ENCODE measurements at regions of chr19 and their contacts with region 1.

Region 1: DNA sequence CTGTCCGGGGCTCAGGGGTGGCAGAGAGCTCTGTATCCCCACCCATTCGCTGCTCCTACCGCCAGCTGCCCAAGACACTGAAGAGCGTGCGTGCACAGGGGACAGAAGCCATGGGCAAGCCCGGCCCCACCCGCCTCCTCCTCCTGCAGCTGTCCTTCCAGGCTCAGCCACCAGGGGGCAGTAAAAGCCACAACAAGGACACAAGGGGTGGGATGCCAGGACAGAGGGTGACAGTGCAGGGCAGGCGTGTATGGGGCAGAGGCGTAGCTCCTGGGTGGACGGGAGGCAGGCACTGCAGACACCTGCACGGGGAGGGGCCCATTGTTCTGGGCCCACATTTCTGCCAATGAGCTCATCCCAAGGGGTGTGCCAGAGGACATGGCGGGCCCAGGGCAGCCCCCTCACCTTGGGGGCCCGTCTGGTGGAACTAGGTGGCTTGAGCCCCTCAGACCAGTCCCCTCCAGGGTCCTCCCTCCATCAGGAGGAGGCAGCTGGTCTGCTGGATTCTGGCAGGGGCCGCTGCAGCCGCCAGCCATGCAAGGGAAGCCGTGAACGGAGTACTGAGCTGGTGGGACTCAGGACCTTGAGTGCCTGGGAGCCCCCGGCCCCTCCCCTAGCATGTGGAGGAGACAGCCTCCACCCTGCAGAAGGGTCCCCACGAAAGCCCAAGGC is 61.1 kb downstream of the MLLT1 start:
- DNase-seq: peak; percentile 27
- H3K4me3 ChIP-seq: no peak overlapping the region
- H3K27ac ChIP-seq: peak overlapping the region in 3 of 4 donors; percentile 31 to 45 (median 35)
- H3K4me1 ChIP-seq: peaks cover 45 to 72% (median 52%) of the 10 kb centered on the region in 3 donors
- H3K27me3 ChIP-seq: no peaks in the 10 kb centered on the region
- CTCF ChIP-seq: peak; percentile 93 to 99 (median 98)
- POLR2A ChIP-seq: no peak

Region 2: DNA sequence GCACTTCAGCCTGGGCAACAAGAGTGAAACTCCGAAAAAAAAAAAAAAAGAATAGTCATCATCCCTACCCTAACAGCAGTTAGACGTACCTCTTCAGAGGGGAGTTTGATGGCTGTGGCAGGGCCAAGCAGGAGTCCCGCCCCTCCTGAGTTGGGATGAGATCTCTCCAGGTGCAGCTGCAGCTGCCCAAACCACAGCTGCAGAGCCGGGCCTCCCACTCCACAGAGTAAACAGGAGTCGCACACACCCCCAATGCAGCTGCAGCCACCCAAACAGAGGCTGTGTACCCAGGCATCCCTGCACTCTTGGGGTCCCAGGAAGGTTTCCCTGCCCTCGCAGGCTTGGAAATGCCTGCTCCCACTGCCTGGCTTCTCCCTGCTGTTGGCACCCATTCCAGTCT is 78.6 kb after region 1 on chr19:
- intact Hi-C with region 1: loop called (anchors 5 kb)
- DNase-seq: no peak
- H3K4me3 ChIP-seq: no peak overlapping the region
- H3K27ac ChIP-seq: no peak overlapping the region
- H3K4me1 ChIP-seq: no peaks in the 10 kb centered on the region
- H3K27me3 ChIP-seq: no peaks in the 10 kb centered on the region
- CTCF ChIP-seq: no peak
- POLR2A ChIP-seq: no peak

Measured in esophagus squamous epithelium (tissue), 5 donors.